Activated CD4-positive, alpha-beta memory T cell treated with anti-CD3 and anti-CD28 coated beads for 36 hours (primary cell): ENCODE measurements at regions of chr19 and their contacts with region 1.

Region 1: GRCh38 chr19:12757544-12758274 is 6.1 kb downstream of the BEST2 start:
- DNase-seq: peak; percentile 78
- H3K4me3 Mint-ChIP-seq: peak overlapping the region; percentile 48
- H3K27ac Mint-ChIP-seq: no peak overlapping the region
- H3K4me1 Mint-ChIP-seq: peaks cover 4% of the 10 kb centered on the region
- H3K27me3 Mint-ChIP-seq: peaks cover 11% of the 10 kb centered on the region

Region 2: GRCh38 chr19:12681074-12681951 is 76.4 kb before region 1 on chr19 and contains the start of gene DHPS:
- CTCF ChIA-PET with region 1: interaction called, 9 read pairs
- POLR2A ChIA-PET with region 1: no interaction called
- intact Hi-C with region 1: loop called (anchors 1 kb)
- DNase-seq: peak; percentile 95
- H3K4me3 Mint-ChIP-seq: peak within 1 kb of the TSS; percentile 95
- H3K27ac Mint-ChIP-seq: peak within 1 kb of the TSS; percentile 94
- H3K4me1 Mint-ChIP-seq: peaks cover 22% of the 10 kb centered on the region
- H3K27me3 Mint-ChIP-seq: no peaks in the 10 kb centered on the region
- total RNA-seq, gene DHPS: 126 to 127 TPM

Region 3: GRCh38 chr19:12716861-12717260 is 40.8 kb before region 1 on chr19:
- CTCF ChIA-PET with region 1: interaction called, 60 read pairs
- POLR2A ChIA-PET with region 1: no interaction called
- intact Hi-C with region 1: loop called (anchors 1 kb)
- DNase-seq: peak; percentile 49
- H3K4me3 Mint-ChIP-seq: no peak overlapping the region
- H3K27ac Mint-ChIP-seq: no peak overlapping the region
- H3K4me1 Mint-ChIP-seq: peaks cover 20% of the 10 kb centered on the region
- H3K27me3 Mint-ChIP-seq: no peaks in the 10 kb centered on the region

Region 4: GRCh38 chr19:12736995-12737834 is 20.5 kb before region 1 on chr19 and contains the start of gene GET3:
- CTCF ChIA-PET with region 1: interaction called, 116 read pairs
- POLR2A ChIA-PET with region 1: interaction called, 5 read pairs
- intact Hi-C with region 1: no loop called
- DNase-seq: peak; percentile 88
- H3K4me3 Mint-ChIP-seq: peak within 1 kb of the TSS; percentile 100
- H3K27ac Mint-ChIP-seq: peak within 1 kb of the TSS; percentile 93
- H3K4me1 Mint-ChIP-seq: peaks cover 33% of the 10 kb centered on the region
- H3K27me3 Mint-ChIP-seq: no peaks in the 10 kb centered on the region
- total RNA-seq, gene GET3: 54.2 TPM

Region 5: GRCh38 chr19:12777217-12778016 is 19.7 kb after region 1 on chr19:
- CTCF ChIA-PET with region 1: interaction called, 110 read pairs
- POLR2A ChIA-PET with region 1: no interaction called
- intact Hi-C with region 1: no loop called
- DNase-seq: peak; percentile 87
- H3K4me3 Mint-ChIP-seq: peak overlapping the region; percentile 76
- H3K27ac Mint-ChIP-seq: peak overlapping the region; percentile 87
- H3K4me1 Mint-ChIP-seq: peaks cover 40% of the 10 kb centered on the region
- H3K27me3 Mint-ChIP-seq: no peaks in the 10 kb centered on the region

Region 6: DNA sequence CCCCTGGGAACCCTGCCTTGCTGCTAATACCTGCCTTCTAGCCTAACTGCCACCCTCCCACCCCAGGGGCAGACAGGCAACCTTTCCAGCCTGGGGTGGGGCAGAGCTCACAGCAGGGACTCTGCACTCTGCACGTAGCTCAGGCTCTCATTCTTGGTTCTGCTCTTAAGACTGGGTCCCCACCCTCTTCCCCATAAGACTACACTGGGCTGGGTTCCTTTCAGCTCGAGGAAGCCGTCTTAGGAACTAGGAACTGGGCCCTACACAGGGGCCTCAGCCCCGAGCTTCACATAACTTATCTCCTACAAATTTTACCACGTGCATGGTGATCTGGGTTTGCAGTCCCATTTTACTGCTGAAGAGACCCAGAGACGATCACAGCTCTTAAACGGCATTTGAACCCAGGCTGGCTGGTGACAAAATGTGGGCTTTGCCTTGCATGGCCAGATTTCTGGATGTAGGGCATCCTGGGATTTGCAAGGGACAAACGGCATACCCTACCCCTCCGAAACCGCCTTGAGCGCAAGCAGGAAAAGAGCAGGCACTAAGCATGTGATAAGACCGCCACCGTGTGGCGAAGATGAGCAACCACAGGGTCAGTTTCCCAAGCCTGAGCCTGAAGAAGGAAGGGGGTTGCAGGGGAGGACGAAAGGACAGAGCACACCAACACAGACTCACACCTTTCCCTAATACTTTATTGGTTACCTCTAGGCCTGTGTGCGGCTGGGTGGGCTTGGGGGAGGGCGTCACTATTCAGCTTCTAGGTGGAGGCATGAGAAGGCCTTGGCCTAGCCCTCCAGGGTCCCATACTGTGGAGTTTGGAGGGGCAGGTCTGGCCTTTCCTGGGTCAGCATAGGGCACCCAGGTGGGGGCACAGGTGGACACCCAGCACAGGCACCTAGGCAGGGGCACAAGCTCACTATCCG is 38.7 kb after region 1 on chr19:
- CTCF ChIA-PET with region 1: interaction called, 636 read pairs
- POLR2A ChIA-PET with region 1: interaction called, 8 read pairs
- intact Hi-C with region 1: loop called (anchors 1 kb)
- DNase-seq: peak; percentile 84
- H3K4me3 Mint-ChIP-seq: peak overlapping the region; percentile 62
- H3K27ac Mint-ChIP-seq: peak overlapping the region; percentile 83
- H3K4me1 Mint-ChIP-seq: peaks cover 35% of the 10 kb centered on the region
- H3K27me3 Mint-ChIP-seq: no peaks in the 10 kb centered on the region

Region 7: GRCh38 chr19:12847159-12848139 is 89.7 kb after region 1 on chr19:
- CTCF ChIA-PET with region 1: interaction called, 280 read pairs
- POLR2A ChIA-PET with region 1: no interaction called
- intact Hi-C with region 1: no loop called
- DNase-seq: peak; percentile 90
- H3K4me3 Mint-ChIP-seq: peak overlapping the region; percentile 29
- H3K27ac Mint-ChIP-seq: no peak overlapping the region
- H3K4me1 Mint-ChIP-seq: peaks cover 5% of the 10 kb centered on the region
- H3K27me3 Mint-ChIP-seq: peaks cover 25% of the 10 kb centered on the region

Region 8: DNA sequence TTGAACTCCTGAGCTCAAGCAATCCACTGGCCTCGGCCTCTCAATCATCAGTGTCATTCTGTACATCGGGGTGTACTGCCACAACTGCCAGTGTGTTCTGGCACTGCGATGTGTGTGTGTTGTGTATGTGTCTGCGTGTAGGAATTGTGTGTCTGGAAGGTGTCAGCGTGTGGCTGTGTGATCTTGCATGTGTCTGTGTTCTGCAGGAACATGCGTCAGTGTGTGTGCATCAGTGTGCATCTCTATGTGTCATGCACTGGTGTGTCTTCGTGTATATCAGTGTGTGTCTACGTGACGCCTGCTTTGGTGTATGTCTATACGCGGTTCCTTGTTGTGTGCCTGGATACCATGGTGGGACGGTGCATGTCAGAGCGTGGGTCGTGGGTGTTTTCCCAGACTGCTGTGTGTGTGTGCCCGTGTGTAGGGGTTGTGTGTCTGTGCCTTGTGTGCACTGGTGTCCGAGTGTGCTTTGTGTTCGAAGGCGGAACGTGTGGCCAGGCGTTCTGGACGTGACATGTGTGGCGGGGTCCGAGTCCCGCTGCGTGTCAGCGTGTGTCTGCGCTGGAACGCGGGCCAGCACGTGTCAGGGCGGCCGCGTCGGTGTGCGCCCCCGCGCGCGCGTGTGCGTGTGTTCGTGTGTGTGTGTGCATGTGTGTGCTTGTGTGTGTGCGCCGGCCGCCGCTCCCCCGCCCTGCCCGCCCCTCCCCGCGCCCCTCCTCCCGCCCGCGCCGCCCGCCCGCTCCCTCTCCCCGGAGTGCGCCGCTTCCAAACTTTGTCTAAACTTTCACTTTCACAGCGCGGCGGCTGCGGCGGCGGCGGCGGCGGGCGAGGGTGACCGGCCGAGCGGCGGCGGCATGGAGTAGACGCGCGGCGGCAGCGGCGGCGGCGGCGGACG is 237.2 kb after region 1 on chr19 and contains the start of gene NFIX:
- CTCF ChIA-PET with region 1: no interaction called
- POLR2A ChIA-PET with region 1: no interaction called
- intact Hi-C with region 1: no loop called
- DNase-seq: peak; percentile 71
- H3K4me3 Mint-ChIP-seq: peak within 1 kb of the TSS; percentile 76
- H3K27ac Mint-ChIP-seq: peak within 1 kb of the TSS; percentile 16
- H3K4me1 Mint-ChIP-seq: peaks cover 6% of the 10 kb centered on the region
- H3K27me3 Mint-ChIP-seq: peaks cover 9% of the 10 kb centered on the region
- total RNA-seq, gene NFIX: 1.6 to 2.0 TPM